ENCODE measurements at regions of chr19 and their contacts with region 1.

Region 1: GRCh38 chr19:51777570-51778462 is 16.8 kb downstream of the FPR2 start:
- DNase-seq: peak in 8 of 9 experiments; percentile 10 to 73 (median 32)
- ATAC-seq: no peak
- H3K4me3 ChIP-seq: no peak overlapping the region
- H3K4me3 Mint-ChIP-seq: no peak overlapping the region
- H3K27ac ChIP-seq: no peak overlapping the region
- H3K27ac Mint-ChIP-seq: no peak overlapping the region
- H3K4me1 ChIP-seq: no peaks in the 10 kb centered on the region
- H3K4me1 Mint-ChIP-seq: peaks cover 5% of the 10 kb centered on the region
- H3K27me3 ChIP-seq: peaks cover 0 to 3% of the 10 kb centered on the region in 2 experiments
- H3K27me3 Mint-ChIP-seq: peaks cover 63% of the 10 kb centered on the region
- CTCF ChIP-seq: peak; percentile 69

Region 2: DNA sequence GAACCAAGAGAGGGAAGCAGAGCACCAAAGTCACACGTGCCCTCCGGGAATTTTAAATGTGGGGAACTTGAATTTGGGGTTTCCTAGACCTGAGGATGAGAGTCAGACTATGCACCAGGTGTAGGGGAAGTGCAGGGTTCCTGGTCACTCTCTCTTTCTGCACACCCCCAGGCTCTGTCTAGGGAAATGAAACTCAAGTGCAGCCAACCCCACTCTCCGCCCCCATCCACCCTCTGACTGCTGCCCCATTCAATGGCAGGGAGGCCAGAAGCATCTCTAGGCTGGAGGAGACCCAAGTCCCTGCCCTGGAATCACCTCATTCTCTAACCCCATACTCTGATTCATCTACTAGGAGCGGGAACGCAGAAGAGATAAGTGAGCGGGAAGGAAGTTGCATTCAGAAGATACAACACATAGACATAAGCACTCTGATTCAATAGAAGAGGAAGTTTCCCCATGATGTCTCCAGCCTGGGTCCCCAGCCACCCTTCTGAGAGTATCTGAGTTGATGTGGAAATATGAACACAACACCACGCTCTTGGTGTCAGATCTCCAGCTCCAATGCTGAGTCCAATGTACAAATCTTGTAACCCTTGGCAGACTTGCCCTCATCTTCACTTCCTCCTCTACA is 126.5 kb before region 1 on chr19:
- CTCF ChIA-PET with region 1: interaction called, 3 read pairs
- POLR2A ChIA-PET with region 1: no interaction called
- intact Hi-C with region 1: loop called (anchors 5 to 10 kb)
- DNase-seq: peak in 1 of 9 experiments; percentile 24
- ATAC-seq: no peak
- H3K4me3 ChIP-seq: no peak overlapping the region
- H3K4me3 Mint-ChIP-seq: no peak overlapping the region
- H3K27ac ChIP-seq: no peak overlapping the region
- H3K27ac Mint-ChIP-seq: no peak overlapping the region
- H3K4me1 ChIP-seq: no peaks in the 10 kb centered on the region
- H3K4me1 Mint-ChIP-seq: no peaks in the 10 kb centered on the region
- H3K27me3 ChIP-seq: no peaks in the 10 kb centered on the region
- H3K27me3 Mint-ChIP-seq: peaks cover 39% of the 10 kb centered on the region
- CTCF ChIP-seq: no peak

Region 3: DNA sequence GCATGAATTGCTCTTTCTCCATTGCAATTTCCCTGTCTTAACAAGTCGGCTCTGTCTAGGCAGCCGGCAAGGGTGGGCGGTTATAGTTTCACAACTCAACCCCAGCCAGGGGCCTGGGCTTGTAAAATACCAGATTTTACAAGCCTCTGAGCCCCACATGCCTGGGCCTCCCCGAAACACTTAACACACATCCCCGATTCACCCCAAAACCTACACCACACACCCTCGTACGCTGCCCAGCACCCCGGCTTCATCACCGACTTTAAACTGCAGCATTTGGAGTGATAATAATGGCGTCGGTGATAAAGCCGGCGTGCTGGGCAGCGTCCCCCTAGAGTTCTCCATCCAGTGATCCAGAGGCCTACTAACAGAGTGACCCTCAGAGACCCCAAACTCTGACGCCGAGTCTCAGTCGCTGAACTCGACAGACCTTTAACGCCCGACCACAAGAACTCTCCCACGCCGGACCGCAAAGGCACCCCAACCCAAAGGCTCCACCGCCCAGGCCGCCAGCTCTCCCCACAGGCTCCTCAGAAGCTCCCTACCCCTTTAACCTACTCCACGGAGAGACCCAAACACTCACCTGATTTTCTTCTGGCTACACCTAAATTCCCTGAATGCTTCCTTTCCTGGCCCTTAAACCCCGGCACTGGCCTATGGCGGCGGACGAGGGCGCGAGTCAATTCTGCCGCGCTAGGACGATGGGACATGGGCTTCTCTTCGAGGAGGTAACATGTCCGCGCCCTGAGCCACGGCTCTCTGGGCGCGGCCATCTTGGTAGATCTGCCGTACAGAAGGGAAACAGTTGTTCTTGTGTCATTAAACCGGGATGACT is 126.7 kb after region 1 on chr19 and contains the start of gene ZNF649:
- CTCF ChIA-PET with region 1: no interaction called
- POLR2A ChIA-PET with region 1: no interaction called
- intact Hi-C with region 1: no loop called
- DNase-seq: peak; percentile 56 to 88 (median 82)
- ATAC-seq: peak; percentile 92
- H3K4me3 ChIP-seq: peak within 1 kb of the TSS; percentile 84 to 91
- H3K4me3 Mint-ChIP-seq: peak within 1 kb of the TSS; percentile 100
- H3K27ac ChIP-seq: peak within 1 kb of the TSS; percentile 75 to 81
- H3K27ac Mint-ChIP-seq: peak within 1 kb of the TSS; percentile 98
- H3K4me1 ChIP-seq: peaks cover 10% of the 10 kb centered on the region
- H3K4me1 Mint-ChIP-seq: peaks cover 24% of the 10 kb centered on the region
- H3K27me3 ChIP-seq: no peaks in the 10 kb centered on the region
- H3K27me3 Mint-ChIP-seq: peaks cover 22% of the 10 kb centered on the region
- CTCF ChIP-seq: no peak
- total RNA-seq, gene ZNF649: 9.1 to 9.5 TPM

Measured in CD8-positive, alpha-beta T cell (primary cell).